Caco-2 (cell line): ENCODE measurements at regions of chr2 and their contacts with region 1.

Region 1: GRCh38 chr2:198296665-198297308 is 492.4 kb downstream of the PLCL1 start:
- DNase-seq: peak; percentile 55 to 68
- H3K4me3 ChIP-seq: no peak overlapping the region
- H3K4me3 Mint-ChIP-seq: no peak overlapping the region
- H3K27ac Mint-ChIP-seq: no peak overlapping the region
- H3K4me1 ChIP-seq: no peaks in the 10 kb centered on the region
- H3K4me1 Mint-ChIP-seq: no peaks in the 10 kb centered on the region
- H3K27me3 ChIP-seq: no peaks in the 10 kb centered on the region; the same call in 1 of the 2 replicates
- H3K27me3 Mint-ChIP-seq: peaks cover 23% of the 10 kb centered on the region
- CTCF ChIP-seq: peak; percentile 75 to 82

Region 2: DNA sequence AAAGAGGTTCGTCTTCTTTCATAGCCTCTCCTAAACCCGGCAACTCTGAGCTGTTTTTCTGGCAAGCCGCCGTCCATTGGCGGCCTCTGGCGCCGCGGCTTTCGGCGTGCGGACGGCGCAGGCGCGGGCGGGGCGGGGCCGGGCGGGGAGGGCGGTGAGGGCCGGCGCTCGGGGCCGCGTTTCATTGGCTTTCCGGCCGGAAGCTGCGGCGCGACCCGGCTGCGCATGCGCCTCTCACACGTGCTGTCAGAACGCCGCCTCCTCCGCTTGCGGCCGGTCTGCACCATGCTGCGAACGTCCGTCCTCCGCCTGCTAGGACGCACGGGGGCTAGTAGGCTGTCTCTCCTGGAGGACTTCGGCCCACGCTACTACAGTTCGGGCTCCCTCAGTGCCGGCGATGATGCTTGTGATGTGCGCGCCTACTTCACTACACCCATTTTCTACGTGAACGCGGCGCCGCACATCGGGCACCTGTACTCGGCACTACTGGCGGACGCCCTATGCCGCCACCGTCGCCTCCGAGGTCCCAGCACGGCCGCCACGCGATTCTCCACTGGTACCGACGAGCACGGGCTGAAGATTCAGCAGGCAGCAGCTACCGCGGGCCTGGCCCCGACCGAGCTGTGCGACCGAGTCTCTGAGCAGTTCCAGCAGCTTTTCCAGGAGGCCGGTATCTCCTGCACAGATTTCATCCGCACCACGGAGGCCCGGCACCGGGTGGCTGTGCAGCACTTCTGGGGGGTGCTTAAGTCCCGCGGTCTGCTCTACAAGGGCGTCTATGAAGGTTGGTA is 591.5 kb before region 1 on chr2 and contains the start of gene MARS2:
- CTCF ChIA-PET with region 1: no interaction called
- POLR2A ChIA-PET with region 1: no interaction called
- intact Hi-C with region 1: loop called (anchors 5 kb)
- DNase-seq: peak; percentile 92 to 94
- H3K4me3 ChIP-seq: peak within 1 kb of the TSS; percentile 86
- H3K4me3 Mint-ChIP-seq: peak within 1 kb of the TSS; percentile 90
- H3K27ac Mint-ChIP-seq: peak within 1 kb of the TSS; percentile 94
- H3K4me1 ChIP-seq: peaks cover 5% of the 10 kb centered on the region
- H3K4me1 Mint-ChIP-seq: peaks cover 12% of the 10 kb centered on the region
- H3K27me3 ChIP-seq: no peaks in the 10 kb centered on the region
- H3K27me3 Mint-ChIP-seq: peaks cover 3% of the 10 kb centered on the region
- CTCF ChIP-seq: no peak
- total RNA-seq, gene MARS2: 12.1 and 13.1 TPM in 2 replicates

Region 3: GRCh38 chr2:197804049-197804757 is 492.6 kb before region 1 on chr2 and contains the start of gene PLCL1:
- CTCF ChIA-PET with region 1: interaction called, 3 read pairs
- POLR2A ChIA-PET with region 1: no interaction called
- intact Hi-C with region 1: loop called (anchors 1 kb)
- DNase-seq: peak; percentile 94
- H3K4me3 ChIP-seq: peak within 1 kb of the TSS; percentile 40
- H3K4me3 Mint-ChIP-seq: peak within 1 kb of the TSS; percentile 84
- H3K27ac Mint-ChIP-seq: peak within 1 kb of the TSS; percentile 47
- H3K4me1 ChIP-seq: peaks cover 5% of the 10 kb centered on the region; the same call in 1 of the 2 replicates
- H3K4me1 Mint-ChIP-seq: peaks cover 8% of the 10 kb centered on the region
- H3K27me3 ChIP-seq: peaks cover 4% of the 10 kb centered on the region
- H3K27me3 Mint-ChIP-seq: peaks cover 24% of the 10 kb centered on the region
- CTCF ChIP-seq: no peak
- total RNA-seq, gene PLCL1: 1.6 TPM in 2 replicates

Region 4: GRCh38 chr2:197851451-197851850 is 445.3 kb before region 1 on chr2:
- CTCF ChIA-PET with region 1: no interaction called
- POLR2A ChIA-PET with region 1: no interaction called
- intact Hi-C with region 1: loop called (anchors 1 kb)
- DNase-seq: peak in 1 of 2 experiments; percentile 16
- H3K4me3 ChIP-seq: no peak overlapping the region
- H3K4me3 Mint-ChIP-seq: no peak overlapping the region
- H3K27ac Mint-ChIP-seq: no peak overlapping the region
- H3K4me1 ChIP-seq: no peaks in the 10 kb centered on the region
- H3K4me1 Mint-ChIP-seq: peaks cover 5% of the 10 kb centered on the region
- H3K27me3 ChIP-seq: no peaks in the 10 kb centered on the region
- H3K27me3 Mint-ChIP-seq: peaks cover 6% of the 10 kb centered on the region
- CTCF ChIP-seq: peak in 1 of 2 experiments; percentile 48

Region 5: GRCh38 chr2:198053776-198054698 is 242.8 kb before region 1 on chr2:
- CTCF ChIA-PET with region 1: no interaction called
- POLR2A ChIA-PET with region 1: no interaction called
- intact Hi-C with region 1: loop called (anchors 5 kb)
- DNase-seq: peak; percentile 49 to 51
- H3K4me3 ChIP-seq: no peak overlapping the region
- H3K4me3 Mint-ChIP-seq: no peak overlapping the region
- H3K27ac Mint-ChIP-seq: no peak overlapping the region
- H3K4me1 ChIP-seq: no peaks in the 10 kb centered on the region
- H3K4me1 Mint-ChIP-seq: no peaks in the 10 kb centered on the region
- H3K27me3 ChIP-seq: no peaks in the 10 kb centered on the region
- H3K27me3 Mint-ChIP-seq: peaks cover 5% of the 10 kb centered on the region
- CTCF ChIP-seq: peak; percentile 57 to 78

Region 6: DNA sequence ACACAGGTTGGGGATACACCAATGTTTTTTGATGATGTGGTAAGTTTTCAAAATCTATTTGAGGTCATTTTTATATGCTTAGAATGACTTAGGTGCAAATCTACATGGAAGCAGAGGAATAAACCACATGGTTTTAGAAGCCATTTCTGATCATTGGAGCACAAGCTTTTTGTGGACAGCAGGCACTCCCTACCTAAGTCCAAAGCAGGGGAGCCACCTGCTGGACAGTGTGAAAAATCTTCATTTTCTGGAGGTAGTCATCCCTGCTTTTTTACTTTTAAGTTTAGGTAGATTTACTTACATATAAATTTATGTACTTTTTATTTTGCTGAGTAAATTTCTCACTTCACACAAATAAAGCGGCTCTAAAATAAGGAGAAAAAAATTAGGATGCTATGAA is 169.2 kb before region 1 on chr2:
- CTCF ChIA-PET with region 1: interaction called, 5 read pairs
- POLR2A ChIA-PET with region 1: no interaction called
- intact Hi-C with region 1: loop called (anchors 1 kb)
- DNase-seq: peak in 1 of 2 experiments; percentile 46
- H3K4me3 ChIP-seq: no peak overlapping the region
- H3K4me3 Mint-ChIP-seq: no peak overlapping the region
- H3K27ac Mint-ChIP-seq: no peak overlapping the region
- H3K4me1 ChIP-seq: no peaks in the 10 kb centered on the region
- H3K4me1 Mint-ChIP-seq: no peaks in the 10 kb centered on the region
- H3K27me3 ChIP-seq: no peaks in the 10 kb centered on the region
- H3K27me3 Mint-ChIP-seq: peaks cover 10% of the 10 kb centered on the region
- CTCF ChIP-seq: peak; percentile 67 to 75